Endothelial cell of umbilical vein (primary cell): ENCODE measurements at regions of chr5 and their contacts with region 1.

Region 1: DNA sequence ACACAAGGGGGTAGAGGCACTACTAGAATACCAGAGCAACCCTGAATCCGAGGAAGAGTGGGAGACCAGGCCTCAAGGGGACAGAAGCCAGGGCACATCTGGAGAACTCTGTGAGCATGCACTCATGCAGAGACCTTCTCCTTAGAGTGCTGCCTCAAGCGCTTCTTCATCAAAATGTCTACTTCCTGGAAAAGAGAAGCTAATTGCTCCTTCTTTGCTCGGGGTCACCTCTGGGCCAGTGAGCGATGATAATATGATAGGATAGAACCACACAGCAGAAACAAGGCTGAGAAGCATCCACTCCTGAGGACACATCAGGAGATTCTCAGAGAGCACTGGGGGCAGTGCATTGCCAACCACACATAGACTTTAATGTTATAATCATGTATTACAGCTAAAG is 23.7 kb upstream of the LMNB1 start:
- DNase-seq: no peak
- H3K4me3 ChIP-seq: no peak overlapping the region
- H3K27ac ChIP-seq: no peak overlapping the region
- H3K4me1 ChIP-seq: no peaks in the 10 kb centered on the region
- H3K27me3 ChIP-seq: no peaks in the 10 kb centered on the region
- CTCF ChIP-seq: no peak
- POLR2A ChIP-seq: no peak

Region 2: GRCh38 chr5:126718246-126718868 is 34.9 kb before region 1 on chr5:
- CTCF ChIA-PET with region 1: interaction called, 3 read pairs
- POLR2A ChIA-PET with region 1: no interaction called
- dilution Hi-C with region 1: no loop called
- intact Hi-C with region 1: loop called (anchors 5 kb)
- DNase-seq: no peak
- H3K4me3 ChIP-seq: no peak overlapping the region
- H3K27ac ChIP-seq: no peak overlapping the region
- H3K4me1 ChIP-seq: no peaks in the 10 kb centered on the region
- H3K27me3 ChIP-seq: peaks cover 0 to 4% of the 10 kb centered on the region in 2 experiments
- CTCF ChIP-seq: no peak
- POLR2A ChIP-seq: no peak